ENCODE measurements at regions of chr1 and their contacts with region 1.

Region 1: GRCh38 chr1:219173758-219174588 is at the start of gene LYPLAL1:
- DNase-seq: peak; percentile 76 to 84
- ATAC-seq: peak; percentile 82 to 87
- H3K4me3 ChIP-seq: peak within 1 kb of the TSS; percentile 69 to 87 (median 76)
- H3K27ac ChIP-seq: peak within 1 kb of the TSS; percentile 92 to 96 (median 94)
- H3K4me1 ChIP-seq: peaks cover 36 to 45% of the 10 kb centered on the region in 2 donors
- H3K27me3 ChIP-seq: no peaks in the 10 kb centered on the region
- CTCF ChIP-seq: peak in 1 of 5 experiments; percentile 18
- POLR2A ChIP-seq: peak; percentile 88 to 89
- total RNA-seq, gene LYPLAL1: 12.6 to 18.9 (median 15.4) TPM

Region 2: GRCh38 chr1:218284934-218285635 is 888.9 kb before region 1 on chr1 and contains the start of gene RRP15:
- in situ Hi-C with region 1: no loop called
- intact Hi-C with region 1: loop called (anchors 2 kb)
- DNase-seq: peak; percentile 80 to 82
- ATAC-seq: peak; percentile 97 to 99
- H3K4me3 ChIP-seq: peak within 1 kb of the TSS; percentile 62 to 99 (median 96)
- H3K27ac ChIP-seq: peak within 1 kb of the TSS; percentile 82 to 93 (median 92)
- H3K4me1 ChIP-seq: peaks cover 17 to 18% of the 10 kb centered on the region in 2 donors
- H3K27me3 ChIP-seq: no peaks in the 10 kb centered on the region
- CTCF ChIP-seq: peak in 1 of 5 experiments; percentile 15
- POLR2A ChIP-seq: peak; percentile 46 to 52
- total RNA-seq, gene RRP15: 13.1 to 27.4 (median 18.8) TPM

Region 3: DNA sequence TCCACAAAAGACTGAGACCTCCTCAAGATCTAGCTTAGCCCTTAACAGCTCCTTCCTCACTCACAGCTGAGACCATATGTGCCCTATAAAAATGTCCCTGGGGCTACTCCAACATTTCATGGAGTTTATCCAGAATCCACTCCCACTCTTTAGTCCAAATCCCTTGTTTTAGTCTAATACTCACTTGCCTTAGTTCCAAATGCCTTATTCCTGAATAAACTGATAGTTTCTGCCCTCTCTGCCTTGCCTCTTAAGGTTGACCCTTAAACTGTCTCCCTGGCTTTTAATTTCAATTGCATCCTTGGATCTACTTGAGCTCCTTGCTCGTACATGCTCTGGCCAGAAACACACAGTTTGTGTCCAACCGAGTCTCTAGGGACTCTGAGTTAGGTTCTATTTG is 47.6 kb before region 1 on chr1:
- in situ Hi-C with region 1: no loop called
- intact Hi-C with region 1: loop called (anchors 5 kb)
- DNase-seq: no peak
- ATAC-seq: no peak
- H3K4me3 ChIP-seq: no peak overlapping the region
- H3K27ac ChIP-seq: no peak overlapping the region
- H3K4me1 ChIP-seq: peaks cover 34% of the 10 kb centered on the region in 2 donors
- H3K27me3 ChIP-seq: no peaks in the 10 kb centered on the region
- CTCF ChIP-seq: no peak
- POLR2A ChIP-seq: no peak